Activated B cell treated with CpG ODN at 0.5 μM for 24 hours (primary cell): ENCODE measurements at regions of chr3 and their contacts with region 1.

Region 1: DNA sequence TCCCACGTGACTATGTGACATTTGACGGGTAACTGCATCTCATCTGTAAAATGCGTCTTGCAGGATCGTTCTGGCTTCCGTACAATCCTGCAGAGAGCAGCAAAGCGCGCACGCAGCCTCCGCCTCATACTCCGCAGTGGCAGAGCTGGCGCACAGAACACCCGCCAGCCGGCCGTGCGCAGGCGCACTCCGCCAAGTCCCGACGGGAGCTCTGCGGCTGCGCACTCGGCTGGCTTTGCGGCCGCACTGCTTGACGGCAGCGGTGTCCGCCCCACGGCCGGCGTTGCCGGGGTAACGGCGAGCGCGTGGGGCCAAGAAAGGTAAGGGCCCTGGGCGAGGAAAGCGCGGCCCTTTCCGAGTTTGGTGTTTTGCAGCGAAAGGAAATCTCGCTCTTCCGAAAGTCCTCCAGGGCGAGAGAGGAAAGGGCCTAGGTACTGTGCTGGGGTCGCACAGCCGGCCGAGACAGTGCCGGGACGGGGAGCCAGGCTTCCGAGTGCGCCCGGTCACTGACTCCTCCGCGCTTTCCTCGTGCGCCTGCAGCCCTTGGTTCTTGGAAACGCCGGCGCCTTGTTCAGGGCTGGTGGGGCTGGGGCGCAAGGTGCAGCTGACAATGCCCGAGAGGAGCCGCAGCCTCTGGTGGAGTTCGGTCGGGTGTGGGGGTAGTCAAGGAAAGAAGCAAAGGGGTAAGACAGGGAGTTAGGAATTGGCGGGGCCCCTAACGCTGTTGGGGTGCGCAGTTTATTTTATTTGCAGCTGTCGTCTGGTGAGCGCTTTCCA is at the start of gene TSEN2:
- DNase-seq: peak; percentile 99
- ATAC-seq: peak; percentile 95
- H3K4me3 Mint-ChIP-seq: peak within 1 kb of the TSS; percentile 96
- H3K27ac Mint-ChIP-seq: peak within 1 kb of the TSS; percentile 92
- H3K4me1 Mint-ChIP-seq: peaks cover 26% of the 10 kb centered on the region
- H3K27me3 Mint-ChIP-seq: no peaks in the 10 kb centered on the region
- CTCF ChIP-seq: no peak
- total RNA-seq, gene TSEN2: 15.9 and 17.4 TPM in 2 replicates

Region 2: DNA sequence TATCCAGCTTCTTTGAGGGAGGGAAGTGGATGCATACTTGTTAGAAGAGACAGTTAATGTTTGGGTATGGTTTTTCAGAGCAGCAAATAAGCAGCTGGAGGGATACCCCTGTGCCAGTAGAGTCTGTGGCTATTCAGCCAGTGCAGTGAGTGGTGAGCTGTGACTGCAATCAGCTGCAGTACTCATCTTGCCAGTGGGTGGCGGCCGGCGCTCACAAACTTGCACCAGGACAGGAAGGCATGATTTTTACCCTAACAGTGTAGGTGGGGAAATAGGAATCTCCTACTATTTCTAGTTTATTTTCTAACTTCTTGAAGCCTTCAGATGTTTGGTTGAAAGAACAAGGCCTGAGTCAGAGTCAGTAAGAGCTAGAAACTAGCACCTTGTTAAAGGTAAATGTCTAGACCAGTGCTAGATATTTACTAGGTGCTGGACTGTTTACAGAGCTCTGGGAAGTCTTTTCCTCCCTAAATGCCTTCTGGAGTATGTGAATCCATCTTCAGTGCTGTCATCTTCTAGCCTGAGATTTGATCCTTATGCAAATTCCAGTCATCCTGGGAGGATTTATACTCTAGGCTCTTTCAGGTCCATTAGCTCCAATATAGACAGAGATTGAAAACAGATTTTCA is 349.2 kb before region 1 on chr3:
- CTCF ChIA-PET with region 1: interaction called, 116 read pairs
- POLR2A ChIA-PET with region 1: interaction called, 4 read pairs
- intact Hi-C with region 1: loop called (anchors 1 kb)
- DNase-seq: peak; percentile 34
- ATAC-seq: peak; percentile 77
- H3K4me3 Mint-ChIP-seq: no peak overlapping the region
- H3K27ac Mint-ChIP-seq: no peak overlapping the region
- H3K4me1 Mint-ChIP-seq: no peaks in the 10 kb centered on the region
- H3K27me3 Mint-ChIP-seq: peaks cover 17% of the 10 kb centered on the region
- CTCF ChIP-seq: peak; percentile 33

Region 3: GRCh38 chr3:12556671-12557472 is 72.5 kb after region 1 on chr3 and contains the start of gene MKRN2:
- CTCF ChIA-PET with region 1: no interaction called
- POLR2A ChIA-PET with region 1: interaction called, 6 read pairs
- intact Hi-C with region 1: loop called (anchors 1 kb)
- DNase-seq: peak; percentile 85
- ATAC-seq: peak; percentile 96
- H3K4me3 Mint-ChIP-seq: peak within 1 kb of the TSS; percentile 89
- H3K27ac Mint-ChIP-seq: peak within 1 kb of the TSS; percentile 62
- H3K4me1 Mint-ChIP-seq: peaks cover 62% of the 10 kb centered on the region
- H3K27me3 Mint-ChIP-seq: peaks cover 9% of the 10 kb centered on the region
- CTCF ChIP-seq: no peak
- total RNA-seq, gene MKRN2: 22.2 and 22.3 TPM in 2 replicates

Region 4: GRCh38 chr3:12719984-12720898 is 235.9 kb after region 1 on chr3:
- CTCF ChIA-PET with region 1: interaction called, 3 read pairs
- POLR2A ChIA-PET with region 1: interaction called, 3 read pairs
- intact Hi-C with region 1: loop called (anchors 2 kb)
- DNase-seq: peak; percentile 45
- ATAC-seq: peak; percentile 99
- H3K4me3 Mint-ChIP-seq: peak overlapping the region; percentile 74
- H3K27ac Mint-ChIP-seq: peak overlapping the region; percentile 69
- H3K4me1 Mint-ChIP-seq: peaks cover 7% of the 10 kb centered on the region
- H3K27me3 Mint-ChIP-seq: peaks cover 3% of the 10 kb centered on the region
- CTCF ChIP-seq: peak; percentile 93

Region 5: DNA sequence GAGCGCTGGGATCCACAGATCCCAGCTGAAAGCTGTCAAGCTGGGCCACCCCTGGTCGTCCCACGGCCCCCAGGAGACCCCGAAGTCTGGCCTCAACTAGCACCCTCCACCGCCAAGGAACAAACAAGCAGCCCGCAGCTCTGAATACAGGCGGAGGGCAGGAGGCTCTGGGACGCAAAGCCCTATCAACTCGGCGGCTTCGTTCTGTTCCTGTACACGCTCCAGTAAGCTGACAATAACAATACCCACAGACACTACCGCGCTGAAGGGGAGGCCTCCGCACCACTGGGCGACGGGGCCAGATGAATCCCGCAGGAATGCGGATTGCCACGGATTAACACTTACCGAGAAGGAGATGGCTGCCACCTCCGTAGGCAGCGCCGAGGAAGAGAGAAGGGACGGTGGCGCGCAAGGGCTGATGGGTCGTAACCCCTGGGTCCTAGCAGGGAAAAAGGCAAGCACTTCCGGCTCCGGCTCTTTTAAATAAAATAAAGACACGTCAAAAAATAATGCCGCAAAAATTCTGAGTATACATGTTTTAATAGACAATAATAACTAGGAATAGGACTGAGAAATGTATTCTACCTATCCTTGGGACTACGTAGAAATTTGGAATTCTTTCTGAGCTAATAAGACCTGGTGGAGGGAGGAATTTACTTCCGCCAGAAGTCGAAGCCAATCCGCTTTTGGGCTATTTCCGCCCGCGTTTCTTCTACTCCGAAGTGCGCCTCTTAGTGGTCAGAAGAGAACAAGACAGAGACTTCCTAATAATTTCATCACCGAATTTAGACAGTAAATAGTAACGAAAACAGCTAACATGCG is 357.0 kb after region 1 on chr3 and contains the start of gene RPL32:
- CTCF ChIA-PET with region 1: no interaction called
- POLR2A ChIA-PET with region 1: no interaction called
- intact Hi-C with region 1: loop called (anchors 1 kb)
- DNase-seq: peak; percentile 78
- ATAC-seq: peak; percentile 92
- H3K4me3 Mint-ChIP-seq: peak within 1 kb of the TSS; percentile 96
- H3K27ac Mint-ChIP-seq: peak within 1 kb of the TSS; percentile 100
- H3K4me1 Mint-ChIP-seq: peaks cover 48% of the 10 kb centered on the region
- H3K27me3 Mint-ChIP-seq: no peaks in the 10 kb centered on the region
- CTCF ChIP-seq: no peak
- total RNA-seq, gene RPL32: 2,996 and 3,448 TPM in 2 replicates

Region 6: GRCh38 chr3:13479581-13480339 is 995.4 kb after region 1 on chr3 and contains the start of gene HDAC11:
- CTCF ChIA-PET with region 1: no interaction called
- POLR2A ChIA-PET with region 1: no interaction called
- intact Hi-C with region 1: loop called (anchors 10 kb)
- DNase-seq: peak; percentile 97
- ATAC-seq: peak; percentile 97
- H3K4me3 Mint-ChIP-seq: peak within 1 kb of the TSS; percentile 90
- H3K27ac Mint-ChIP-seq: peak within 1 kb of the TSS; percentile 79
- H3K4me1 Mint-ChIP-seq: peaks cover 2% of the 10 kb centered on the region
- H3K27me3 Mint-ChIP-seq: peaks cover under 1% of the 10 kb centered on the region
- CTCF ChIP-seq: no peak
- total RNA-seq, gene HDAC11: 1.6 and 2.5 TPM in 2 replicates